AG04449 (cell line): ENCODE measurements at regions of chr16 and their contacts with region 1.

Region 1: DNA sequence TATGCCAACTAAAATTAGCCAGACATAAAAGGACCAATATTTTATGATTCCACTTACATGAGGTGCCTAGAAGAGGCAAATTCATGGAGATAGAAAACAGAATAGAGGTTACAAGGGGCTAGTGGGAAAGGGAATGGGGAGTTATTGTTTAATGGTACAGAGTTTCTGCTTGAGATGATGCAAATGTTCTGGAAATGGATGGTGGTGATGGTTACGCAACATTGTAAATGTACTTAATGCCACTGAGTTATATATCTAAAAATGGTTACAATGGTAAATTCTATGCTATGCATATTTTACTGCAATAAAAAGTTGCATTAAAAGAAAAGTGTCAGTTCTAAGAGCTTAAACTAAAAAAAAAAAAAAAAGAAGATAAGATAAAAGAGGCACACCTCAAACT is 17.9 kb downstream of the MT1X start:
- DNase-seq: no peak
- H3K4me3 ChIP-seq: no peak overlapping the region
- CTCF ChIP-seq: no peak

Region 2: DNA sequence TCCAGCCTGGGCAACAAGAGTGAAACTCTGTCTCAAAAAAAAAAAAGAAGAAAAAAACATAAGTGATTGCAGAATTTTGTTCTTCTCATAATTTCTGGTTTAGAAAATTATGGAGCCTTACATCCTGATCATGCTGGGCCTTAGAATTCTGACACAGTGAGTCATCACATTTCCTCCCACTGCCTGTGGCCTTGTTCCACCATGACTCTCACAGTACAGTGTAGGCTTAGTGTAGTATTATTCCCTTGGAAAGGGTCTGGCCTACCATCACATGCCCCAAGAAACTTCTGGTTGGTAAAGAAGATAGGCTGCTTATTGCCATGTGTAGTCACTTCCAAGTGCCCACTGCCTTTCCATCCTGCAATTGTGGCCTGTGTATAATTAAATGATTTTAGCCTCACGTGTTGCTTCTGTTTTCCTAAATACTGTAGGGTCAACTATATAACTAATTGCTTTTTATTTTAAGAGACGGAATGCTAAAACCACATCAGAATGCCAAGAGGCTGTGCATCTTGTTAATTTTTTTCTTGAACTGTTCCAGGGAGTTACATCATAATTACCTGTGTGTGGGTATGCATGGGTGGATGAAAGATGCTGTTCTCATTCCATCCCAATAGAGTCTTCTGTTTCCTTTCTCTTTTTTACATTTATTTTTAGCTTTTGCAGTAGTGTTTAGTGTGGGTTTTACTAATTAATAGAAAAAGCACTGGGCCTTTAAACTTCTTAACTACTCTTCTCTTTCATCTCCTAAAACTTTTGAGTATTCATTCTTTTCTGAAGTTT is 222.9 kb before region 1 on chr16:
- CTCF ChIA-PET with region 1: interaction called, 10 read pairs
- POLR2A ChIA-PET with region 1: no interaction called
- DNase-seq: peak; percentile 70
- H3K4me3 ChIP-seq: no peak overlapping the region
- CTCF ChIP-seq: no peak

Region 3: DNA sequence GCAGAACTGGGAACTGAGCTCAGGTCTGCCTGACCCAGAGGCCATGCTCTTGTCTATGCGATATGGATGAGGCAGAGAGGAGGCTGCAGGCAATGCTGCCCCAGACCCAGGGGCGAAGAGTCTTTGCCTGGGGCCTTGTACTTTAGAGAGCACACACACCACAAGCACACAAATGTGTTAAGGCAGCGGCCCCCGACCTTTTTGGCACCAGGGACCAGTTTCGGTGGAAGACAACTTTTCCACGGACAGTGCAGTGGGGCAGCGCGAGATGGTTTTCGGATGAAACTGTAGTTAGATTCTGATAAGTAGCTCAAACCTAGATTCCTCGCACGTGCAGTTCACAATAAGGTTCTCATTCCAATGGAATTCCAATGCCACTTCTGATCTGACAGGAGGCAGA is 128.7 kb before region 1 on chr16:
- CTCF ChIA-PET with region 1: interaction called, 60 read pairs
- POLR2A ChIA-PET with region 1: no interaction called
- DNase-seq: no peak
- H3K4me3 ChIP-seq: no peak overlapping the region
- CTCF ChIP-seq: no peak

Region 4: DNA sequence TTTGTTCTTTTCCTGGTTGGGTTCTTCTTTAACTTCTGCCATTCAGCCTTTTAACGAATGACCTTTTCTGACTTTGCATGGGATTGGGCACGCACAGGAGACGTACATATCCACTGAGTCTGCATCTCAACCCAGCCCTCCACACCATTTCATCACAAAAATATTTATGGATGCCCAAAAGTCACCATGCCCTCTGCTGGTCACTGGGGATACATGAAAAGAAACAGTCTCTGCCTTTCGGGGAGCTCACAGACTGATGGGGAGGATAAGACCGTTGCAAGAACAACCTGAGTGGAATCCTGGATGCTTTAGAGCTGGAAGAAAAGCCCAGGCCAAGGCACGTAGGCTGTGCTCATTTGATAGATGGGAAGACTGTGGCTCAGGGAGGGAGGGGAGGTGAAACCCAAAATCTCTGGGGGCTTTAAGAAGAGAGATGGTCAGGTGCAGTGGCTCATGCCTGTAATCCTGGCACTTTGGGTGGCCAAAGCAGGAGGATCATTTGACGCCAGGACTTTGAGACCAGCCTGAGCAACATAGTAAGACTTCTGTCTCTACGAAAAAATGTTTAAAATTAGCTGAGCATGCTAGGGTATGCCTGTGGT is 99.7 kb before region 1 on chr16:
- CTCF ChIA-PET with region 1: interaction called, 174 read pairs
- POLR2A ChIA-PET with region 1: interaction called, 3 read pairs
- DNase-seq: no peak
- H3K4me3 ChIP-seq: no peak overlapping the region
- CTCF ChIP-seq: peak; percentile 65

Region 5: GRCh38 chr16:56681939-56682702 is 18.1 kb before region 1 on chr16 and contains the start of gene MT1X:
- CTCF ChIA-PET with region 1: interaction called, 32 read pairs
- POLR2A ChIA-PET with region 1: interaction called, 3 read pairs
- DNase-seq: peak; percentile 10
- H3K4me3 ChIP-seq: peak within 1 kb of the TSS; percentile 73
- CTCF ChIP-seq: no peak

Region 6: DNA sequence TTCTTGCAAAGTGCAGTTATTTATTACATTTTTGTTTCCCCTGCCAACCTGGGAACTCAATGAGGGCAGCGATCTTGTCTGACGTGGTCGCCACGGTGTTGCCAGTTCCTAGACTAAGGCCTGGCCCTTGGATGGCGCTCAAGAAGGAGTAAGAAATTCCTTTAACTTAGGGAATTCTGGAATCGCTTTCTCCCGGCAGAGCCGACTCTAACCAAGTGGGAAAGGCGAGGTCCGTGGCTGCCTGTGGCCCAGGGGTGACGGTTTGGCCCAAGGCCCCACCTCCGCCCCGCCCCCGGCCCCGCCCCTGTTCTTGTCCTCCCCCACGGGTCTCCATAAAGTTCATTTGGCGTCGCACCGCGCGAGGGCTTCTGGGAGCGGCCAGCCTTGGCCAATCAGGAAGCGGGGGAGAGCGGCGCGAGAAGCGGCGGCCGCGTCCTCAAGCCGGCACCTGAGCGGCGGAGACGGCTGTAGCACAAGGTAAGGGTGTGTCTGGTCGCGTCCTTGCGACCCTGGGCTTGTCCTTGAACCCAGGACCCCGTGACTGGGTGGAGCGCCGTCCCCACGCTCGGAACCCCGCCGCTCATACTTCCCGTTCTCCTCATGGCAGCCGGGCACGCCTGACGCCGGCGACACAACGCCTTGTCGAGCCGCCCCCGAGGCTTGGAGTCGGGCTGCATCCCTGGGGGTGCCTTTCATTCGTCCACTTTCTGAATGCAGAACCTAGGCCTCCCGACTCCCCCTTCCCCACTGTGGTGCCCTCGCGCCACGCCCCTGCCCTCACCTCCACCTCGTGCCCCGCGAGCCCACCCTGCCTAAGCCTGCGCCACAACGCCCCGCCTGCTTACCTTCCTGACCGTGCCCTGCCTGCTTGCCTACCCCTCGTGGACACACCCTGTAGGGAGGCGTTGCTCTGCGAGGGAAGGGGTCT is 29.8 kb after region 1 on chr16 and contains the start of gene NUP93:
- CTCF ChIA-PET with region 1: interaction called, 16 read pairs
- POLR2A ChIA-PET with region 1: no interaction called
- DNase-seq: peak; percentile 37
- H3K4me3 ChIP-seq: peak within 1 kb of the TSS; percentile 98
- CTCF ChIP-seq: no peak